PC-3 (cell line): ENCODE measurements at regions of chr10 and their contacts with region 1.

Region 1: GRCh38 chr10:14954001-14954770 is at the start of gene DCLRE1C:
- DNase-seq: peak; percentile 82
- ATAC-seq: peak; percentile 89
- H3K4me3 ChIP-seq: peak within 1 kb of the TSS; percentile 72
- H3K27ac ChIP-seq: peak within 1 kb of the TSS; percentile 97
- H3K4me1 ChIP-seq: peaks cover 13% of the 10 kb centered on the region
- H3K27me3 ChIP-seq: no peaks in the 10 kb centered on the region
- CTCF ChIP-seq: no peak
- total RNA-seq, gene DCLRE1C: 3.7 and 9.8 TPM in 2 replicates

Region 2: GRCh38 chr10:14880229-14880628 is 74.0 kb before region 1 on chr10:
- CTCF ChIA-PET with region 1: no interaction called
- POLR2A ChIA-PET with region 1: interaction called, 5 read pairs
- intact Hi-C with region 1: loop called (anchors 5 kb)
- DNase-seq: peak; percentile 18
- ATAC-seq: no peak
- H3K4me3 ChIP-seq: peak overlapping the region; percentile 86
- H3K27ac ChIP-seq: no peak overlapping the region
- H3K4me1 ChIP-seq: peaks cover 15% of the 10 kb centered on the region
- H3K27me3 ChIP-seq: no peaks in the 10 kb centered on the region
- CTCF ChIP-seq: no peak

Region 3: GRCh38 chr10:14891151-14891550 is 63.0 kb before region 1 on chr10:
- CTCF ChIA-PET with region 1: no interaction called
- POLR2A ChIA-PET with region 1: no interaction called
- intact Hi-C with region 1: no loop called
- DNase-seq: no peak
- ATAC-seq: no peak
- H3K4me3 ChIP-seq: no peak overlapping the region
- H3K27ac ChIP-seq: no peak overlapping the region
- H3K4me1 ChIP-seq: no peaks in the 10 kb centered on the region
- H3K27me3 ChIP-seq: no peaks in the 10 kb centered on the region
- CTCF ChIP-seq: no peak

Region 4: DNA sequence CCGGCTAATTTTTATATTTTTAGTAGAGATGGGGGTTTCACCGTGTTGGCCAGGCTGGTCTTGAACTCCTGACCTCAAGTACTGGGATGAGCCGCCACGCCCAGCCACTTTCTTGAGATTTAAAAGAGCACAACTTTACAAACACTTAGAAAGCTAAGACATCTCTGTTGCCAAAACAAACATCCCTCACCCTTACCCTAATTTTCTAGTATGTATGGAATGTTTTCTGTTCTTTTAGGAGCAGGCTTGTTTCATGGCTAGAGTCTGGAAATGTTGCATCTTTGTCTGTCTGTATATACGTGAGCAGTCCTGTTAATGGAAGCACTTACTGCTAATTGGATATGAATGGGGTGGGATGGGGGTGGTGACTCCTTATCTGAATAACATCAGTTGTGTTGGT is 92.4 kb after region 1 on chr10:
- CTCF ChIA-PET with region 1: no interaction called
- POLR2A ChIA-PET with region 1: interaction called, 55 read pairs
- intact Hi-C with region 1: no loop called
- DNase-seq: peak; percentile 30
- ATAC-seq: no peak
- H3K4me3 ChIP-seq: no peak overlapping the region
- H3K27ac ChIP-seq: no peak overlapping the region
- H3K4me1 ChIP-seq: peaks cover 7% of the 10 kb centered on the region; the same call in 1 of the 2 replicates
- H3K27me3 ChIP-seq: no peaks in the 10 kb centered on the region
- CTCF ChIP-seq: no peak

Region 5: DNA sequence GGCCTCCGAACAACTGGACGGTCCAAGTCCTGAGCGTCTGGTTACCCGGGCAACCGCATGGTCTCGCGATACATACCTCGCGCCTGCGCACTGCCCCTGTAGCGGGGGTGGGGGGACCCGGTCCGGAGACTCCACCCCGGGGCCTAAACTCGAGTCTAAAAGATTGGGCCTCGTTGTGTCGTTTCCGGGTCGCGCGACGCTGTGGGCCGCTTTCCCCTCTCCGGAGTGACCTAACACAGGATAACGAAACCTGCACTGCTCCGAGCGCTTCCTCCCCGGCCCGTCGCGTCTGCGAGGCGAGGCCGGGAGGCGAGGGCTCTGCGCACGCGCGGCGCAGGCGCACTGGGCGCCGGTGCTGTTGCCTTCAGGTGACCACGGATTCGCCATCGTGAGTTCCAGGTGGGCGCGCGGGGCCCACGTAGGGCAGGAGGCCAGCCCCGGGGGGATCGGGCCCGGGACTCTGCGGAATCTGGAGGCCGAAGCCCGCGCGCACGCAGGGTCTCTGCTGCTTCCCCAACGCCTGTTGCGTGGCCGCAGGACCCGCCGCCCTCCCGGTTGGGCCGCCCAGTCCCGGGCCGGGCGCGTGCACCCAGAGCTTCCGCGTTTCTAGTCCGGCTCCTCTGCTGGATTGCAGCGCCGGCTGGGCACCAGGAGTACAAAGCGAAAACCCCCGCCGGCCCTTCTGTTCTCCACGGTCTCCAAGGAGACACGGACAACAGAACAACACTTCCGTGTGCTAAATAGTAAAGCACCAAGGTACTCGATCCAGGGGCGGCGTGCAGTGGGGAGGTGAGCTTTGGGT is 143.0 kb after region 1 on chr10 and contains the start of gene RPP38:
- CTCF ChIA-PET with region 1: no interaction called
- POLR2A ChIA-PET with region 1: interaction called, 3 read pairs
- intact Hi-C with region 1: loop called (anchors 1 kb)
- DNase-seq: peak; percentile 85
- ATAC-seq: peak; percentile 85
- H3K4me3 ChIP-seq: peak within 1 kb of the TSS; percentile 94
- H3K27ac ChIP-seq: peak within 1 kb of the TSS; percentile 94
- H3K4me1 ChIP-seq: no peaks in the 10 kb centered on the region; the same call in 1 of the 2 replicates
- H3K27me3 ChIP-seq: no peaks in the 10 kb centered on the region
- CTCF ChIP-seq: no peak
- total RNA-seq, gene RPP38: 8.5 and 9.9 TPM in 2 replicates